ENCODE measurements at regions of chr7 and their contacts with region 1.

Region 1: DNA sequence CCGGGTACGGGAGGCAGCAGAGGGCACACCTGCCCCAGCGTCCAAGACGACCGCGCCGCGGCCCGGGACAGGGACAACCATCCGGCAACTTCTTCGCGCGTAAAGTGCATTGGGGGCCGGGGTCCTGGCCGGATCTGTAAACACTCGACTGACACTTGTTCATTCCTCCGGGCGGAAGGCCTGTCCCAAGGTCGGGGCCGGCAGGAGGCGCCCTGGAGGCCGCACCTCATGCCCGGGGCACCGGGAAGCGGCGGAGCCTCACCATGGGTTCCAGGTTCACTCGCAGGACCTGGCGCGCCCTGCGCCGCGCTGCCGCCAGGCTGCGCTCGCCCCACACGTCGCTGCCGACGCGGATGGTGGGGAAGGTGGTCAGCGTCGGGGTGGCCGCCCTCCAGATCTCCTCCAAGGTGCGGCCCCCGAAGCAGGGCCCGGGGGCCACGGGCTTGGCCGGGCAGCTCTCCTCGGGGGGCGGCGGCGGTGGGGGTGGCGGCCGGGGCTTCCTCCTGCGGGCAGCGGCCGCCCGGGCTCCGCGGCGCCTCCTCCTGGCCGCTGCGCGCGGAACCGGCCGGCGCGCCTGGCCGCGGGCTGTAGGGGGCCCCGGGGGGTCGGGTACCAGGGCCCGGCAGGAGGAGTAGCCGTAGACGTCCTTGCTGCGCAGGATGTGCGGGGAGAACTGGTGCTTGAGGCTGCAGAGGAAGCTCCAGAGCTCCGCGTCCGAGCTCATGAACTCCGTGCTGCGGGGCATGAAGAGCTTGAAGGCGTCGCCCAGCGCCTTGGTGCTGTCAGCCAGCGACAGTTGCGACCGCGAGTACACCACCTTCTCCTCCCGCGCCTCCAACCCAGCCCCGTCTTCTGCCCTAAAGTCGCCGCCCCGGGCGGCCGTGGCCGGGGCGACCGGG is 746 bp downstream of the CCDC71L start:
- DNase-seq: peak; percentile 81
- H3K27ac ChIP-seq: peak overlapping the region; percentile 74
- CTCF ChIP-seq: peak; percentile 98

Region 2: GRCh38 chr7:106542550-106543220 is 117.5 kb before region 1 on chr7:
- CTCF ChIA-PET with region 1: interaction called, 10 read pairs
- POLR2A ChIA-PET with region 1: interaction called, 3 read pairs
- DNase-seq: peak; percentile 63
- H3K27ac ChIP-seq: no peak overlapping the region
- CTCF ChIP-seq: peak; percentile 42